PC-3 (cell line): ENCODE measurements at regions of chr6 and their contacts with region 1.

Region 1: GRCh38 chr6:3383525-3383924 is 73.3 kb downstream of the SLC22A23 start:
- DNase-seq: peak; percentile 85
- ATAC-seq: peak; percentile 11
- H3K4me3 ChIP-seq: no peak overlapping the region
- H3K27ac ChIP-seq: peak overlapping the region; percentile 94
- H3K4me1 ChIP-seq: peaks cover 56% of the 10 kb centered on the region
- H3K27me3 ChIP-seq: no peaks in the 10 kb centered on the region
- CTCF ChIP-seq: no peak

Region 2: GRCh38 chr6:3356056-3356761 is 27.3 kb before region 1 on chr6:
- CTCF ChIA-PET with region 1: no interaction called
- POLR2A ChIA-PET with region 1: no interaction called
- intact Hi-C with region 1: loop called (anchors 2 kb)
- DNase-seq: peak; percentile 57
- ATAC-seq: peak; percentile 57
- H3K4me3 ChIP-seq: peak overlapping the region; percentile 60
- H3K27ac ChIP-seq: peak overlapping the region; percentile 75
- H3K4me1 ChIP-seq: peaks cover 23% of the 10 kb centered on the region
- H3K27me3 ChIP-seq: no peaks in the 10 kb centered on the region
- CTCF ChIP-seq: no peak

Region 3: DNA sequence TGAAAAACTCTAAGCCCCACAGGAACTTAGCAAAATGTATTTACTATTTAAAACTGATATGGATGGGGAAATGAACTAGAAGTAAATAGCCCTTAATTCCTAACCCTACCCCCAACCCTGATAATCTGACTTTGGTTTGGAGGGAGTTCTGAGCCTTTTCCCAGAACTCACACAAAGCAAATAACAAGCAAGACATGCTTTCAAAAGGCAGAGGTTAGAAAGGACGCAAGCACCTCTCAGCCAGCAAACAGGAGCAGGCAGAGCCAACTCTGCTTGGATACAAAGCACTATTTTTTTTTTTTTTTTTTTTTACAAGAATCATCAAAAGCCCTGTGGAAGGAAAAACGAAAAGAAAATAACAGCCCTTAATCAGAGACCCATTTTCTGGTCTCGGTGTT is 14.6 kb after region 1 on chr6:
- CTCF ChIA-PET with region 1: no interaction called
- POLR2A ChIA-PET with region 1: interaction called, 4 read pairs
- intact Hi-C with region 1: loop called (anchors 2 kb)
- DNase-seq: no peak
- ATAC-seq: no peak
- H3K4me3 ChIP-seq: no peak overlapping the region
- H3K27ac ChIP-seq: no peak overlapping the region
- H3K4me1 ChIP-seq: peaks cover 6% of the 10 kb centered on the region
- H3K27me3 ChIP-seq: no peaks in the 10 kb centered on the region
- CTCF ChIP-seq: no peak